Activated CD4-positive, alpha-beta T cell treated with anti-CD3 and anti-CD28 coated beads for 36 hours (primary cell): ENCODE measurements at regions of chr19 and their contacts with region 1.

Region 1: GRCh38 chr19:33373701-33374421 is at the start of gene CEBPG:
- DNase-seq: peak; percentile 78
- ATAC-seq: peak; percentile 42
- H3K4me3 Mint-ChIP-seq: peak within 1 kb of the TSS; percentile 94
- H3K27ac Mint-ChIP-seq: peak within 1 kb of the TSS; percentile 93
- H3K4me1 Mint-ChIP-seq: peaks cover 45% of the 10 kb centered on the region
- H3K27me3 Mint-ChIP-seq: no peaks in the 10 kb centered on the region
- total RNA-seq, gene CEBPG: 25.9 to 29.6 TPM

Region 2: DNA sequence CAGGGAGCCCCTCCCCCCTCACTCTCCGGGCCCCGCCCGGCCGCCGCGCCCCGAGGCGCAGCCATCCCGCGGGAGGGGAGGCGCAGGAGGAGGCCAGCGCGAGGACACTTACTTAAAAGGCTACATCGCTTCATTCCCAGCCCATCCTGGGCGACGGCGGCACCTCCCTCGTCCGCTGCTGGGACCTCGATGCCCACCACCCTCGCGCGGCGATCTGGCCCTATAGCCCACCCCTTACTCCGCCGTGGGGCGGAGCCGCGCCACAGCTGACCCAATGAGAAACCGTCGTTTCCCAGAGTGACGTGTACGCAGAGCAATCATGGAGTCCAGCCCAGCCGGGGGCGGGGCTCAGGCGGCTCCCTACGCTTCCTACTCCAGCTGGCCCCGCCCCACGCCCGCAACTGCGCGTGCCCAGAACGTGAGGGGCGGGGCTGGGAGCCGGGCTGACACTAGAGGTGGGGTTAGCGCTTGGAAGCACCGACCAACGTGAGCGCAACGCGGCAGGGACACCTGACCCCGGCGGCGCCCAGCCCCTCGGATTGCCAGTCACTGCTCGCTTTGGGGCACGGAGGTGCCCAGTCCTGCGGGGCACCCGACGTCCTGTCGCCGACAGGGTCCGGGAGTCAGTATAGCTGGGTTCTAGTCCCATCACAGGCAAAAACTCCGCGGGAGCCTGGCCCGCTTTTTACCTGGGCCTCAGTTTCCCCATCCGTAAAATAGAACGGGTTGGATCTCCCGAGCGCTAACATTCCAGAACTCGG is 698.7 kb before region 1 on chr19 and contains the start of gene ANKRD27:
- CTCF ChIA-PET with region 1: no interaction called
- POLR2A ChIA-PET with region 1: no interaction called
- intact Hi-C with region 1: loop called in 1 of 2 experiments (anchors 5 kb)
- DNase-seq: peak; percentile 99
- ATAC-seq: peak; percentile 95
- H3K4me3 Mint-ChIP-seq: peak within 1 kb of the TSS; percentile 78
- H3K27ac Mint-ChIP-seq: peak within 1 kb of the TSS; percentile 69
- H3K4me1 Mint-ChIP-seq: peaks cover 30% of the 10 kb centered on the region
- H3K27me3 Mint-ChIP-seq: peaks cover 11% of the 10 kb centered on the region
- total RNA-seq, gene ANKRD27: 36.6 to 37.0 TPM

Region 3: GRCh38 chr19:33134571-33135041 is 239.3 kb before region 1 on chr19:
- CTCF ChIA-PET with region 1: no interaction called
- POLR2A ChIA-PET with region 1: no interaction called
- intact Hi-C with region 1: loop called in 1 of 2 experiments (anchors 2 kb)
- DNase-seq: peak; percentile 91
- ATAC-seq: peak; percentile 96
- H3K4me3 Mint-ChIP-seq: peak overlapping the region; percentile 66
- H3K27ac Mint-ChIP-seq: no peak overlapping the region
- H3K4me1 Mint-ChIP-seq: peaks cover 12% of the 10 kb centered on the region
- H3K27me3 Mint-ChIP-seq: no peaks in the 10 kb centered on the region

Region 4: DNA sequence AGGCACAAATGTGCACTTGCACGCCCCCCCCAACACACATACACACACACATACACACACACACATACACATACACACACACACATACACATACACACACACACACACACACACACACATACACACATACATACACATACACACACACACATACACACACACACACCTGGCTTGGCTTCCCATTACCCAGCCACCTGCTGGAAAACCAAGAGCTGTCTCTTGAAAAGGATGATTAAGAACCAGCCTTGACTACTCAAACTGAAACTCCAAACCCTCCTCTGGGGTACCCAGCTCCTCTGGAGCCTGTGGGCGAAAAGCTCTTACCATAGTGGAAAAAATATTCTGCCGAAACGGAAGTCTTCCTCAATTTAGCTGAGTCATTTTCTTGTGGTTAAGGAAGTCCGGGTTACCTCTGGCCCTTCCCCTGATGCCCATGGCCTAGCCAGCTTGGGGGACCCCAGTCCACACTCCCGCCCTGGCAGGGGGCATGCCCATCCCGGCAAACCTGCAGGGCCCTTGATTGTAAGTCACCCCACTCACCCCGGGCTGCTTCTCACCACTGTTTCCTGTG is 93.4 kb before region 1 on chr19:
- CTCF ChIA-PET with region 1: interaction called, 3 read pairs
- POLR2A ChIA-PET with region 1: interaction called, 3 read pairs
- intact Hi-C with region 1: loop called in 1 of 2 experiments (anchors 1 kb)
- DNase-seq: peak; percentile 73
- ATAC-seq: peak; percentile 96
- H3K4me3 Mint-ChIP-seq: no peak overlapping the region
- H3K27ac Mint-ChIP-seq: peak overlapping the region; percentile 51
- H3K4me1 Mint-ChIP-seq: peaks cover 12% of the 10 kb centered on the region
- H3K27me3 Mint-ChIP-seq: peaks cover 14% of the 10 kb centered on the region

Region 5: GRCh38 chr19:34171877-34172660 is 798.2 kb after region 1 on chr19 and contains the start of gene LSM14A:
- CTCF ChIA-PET with region 1: no interaction called
- POLR2A ChIA-PET with region 1: no interaction called
- intact Hi-C with region 1: loop called in 1 of 2 experiments (anchors 1 kb)
- DNase-seq: peak; percentile 95
- ATAC-seq: peak; percentile 70
- H3K4me3 Mint-ChIP-seq: peak within 1 kb of the TSS; percentile 88
- H3K27ac Mint-ChIP-seq: peak within 1 kb of the TSS; percentile 99
- H3K4me1 Mint-ChIP-seq: peaks cover 36% of the 10 kb centered on the region
- H3K27me3 Mint-ChIP-seq: no peaks in the 10 kb centered on the region
- total RNA-seq, gene LSM14A: 89.0 to 151 TPM

Region 6: GRCh38 chr19:34733826-34734600 is 1360.2 kb after region 1 on chr19 and contains the start of gene ZNF181:
- CTCF ChIA-PET with region 1: no interaction called
- POLR2A ChIA-PET with region 1: no interaction called
- intact Hi-C with region 1: loop called in 1 of 2 experiments (anchors 10 kb)
- DNase-seq: peak; percentile 90
- ATAC-seq: peak; percentile 89
- H3K4me3 Mint-ChIP-seq: peak within 1 kb of the TSS; percentile 96
- H3K27ac Mint-ChIP-seq: peak within 1 kb of the TSS; percentile 96
- H3K4me1 Mint-ChIP-seq: peaks cover 22% of the 10 kb centered on the region
- H3K27me3 Mint-ChIP-seq: no peaks in the 10 kb centered on the region
- total RNA-seq, gene ZNF181: 4.5 TPM